ENCODE measurements at regions of chr22 and their contacts with region 1.

Region 1: DNA sequence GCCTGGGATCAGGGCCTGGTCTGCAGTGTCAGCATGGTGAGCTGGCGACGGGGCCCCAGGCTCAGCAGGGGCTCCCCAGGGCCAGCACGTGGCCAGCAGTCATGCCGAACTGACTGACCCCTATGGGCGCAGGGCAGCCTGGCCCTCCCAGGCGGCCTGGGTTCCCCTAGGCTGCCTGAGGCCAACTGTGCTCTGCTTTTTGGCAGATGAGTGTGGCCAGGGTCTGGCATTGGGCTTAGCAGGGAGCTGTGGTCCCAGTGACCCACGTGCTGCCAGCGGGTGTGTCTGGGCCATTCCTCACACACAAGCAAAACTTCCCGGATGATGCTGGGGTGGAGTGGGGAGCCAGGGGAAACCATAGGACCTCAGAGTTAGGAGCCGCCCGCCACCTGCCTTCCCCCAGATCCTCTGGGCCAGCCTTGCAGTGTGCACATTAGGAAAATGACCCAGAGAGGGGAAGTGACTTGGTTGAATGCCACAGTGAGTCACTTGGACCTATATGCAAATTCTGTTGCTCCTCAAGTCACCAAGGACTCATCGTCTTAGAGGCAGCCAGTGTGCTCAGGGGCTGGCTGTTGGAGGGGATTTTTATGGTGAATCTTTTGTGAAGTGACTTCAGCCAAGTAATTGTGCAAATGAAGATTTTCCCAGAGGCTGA is 6.5 kb downstream of the ADORA2A start:
- DNase-seq: peak in 1 of 2 donors; percentile 20
- ATAC-seq: peak; percentile 13 to 24
- H3K4me3 ChIP-seq: no peak overlapping the region
- H3K27ac ChIP-seq: peak overlapping the region; percentile 47 to 65 (median 57)
- H3K4me1 ChIP-seq: peaks cover 30 to 31% of the 10 kb centered on the region in 2 donors
- H3K27me3 ChIP-seq: no peaks in the 10 kb centered on the region
- CTCF ChIP-seq: no peak
- POLR2A ChIP-seq: no peak

Region 2: GRCh38 chr22:24503137-24503842 is 69.3 kb after region 1 on chr22:
- in situ Hi-C with region 1: loop called in 1 of 4 experiments (anchors 10 kb)
- intact Hi-C with region 1: no loop called
- DNase-seq: no peak
- ATAC-seq: peak in 1 of 2 donors; percentile 55
- H3K4me3 ChIP-seq: no peak overlapping the region
- H3K27ac ChIP-seq: no peak overlapping the region
- H3K4me1 ChIP-seq: peaks cover 0 to 10% of the 10 kb centered on the region in 2 donors
- H3K27me3 ChIP-seq: no peaks in the 10 kb centered on the region
- CTCF ChIP-seq: peak; percentile 21 to 67 (median 57)
- POLR2A ChIP-seq: no peak

Region 3: GRCh38 chr22:24516301-24516737 is 82.4 kb after region 1 on chr22:
- in situ Hi-C with region 1: loop called in 2 of 4 experiments (anchors 10 kb)
- intact Hi-C with region 1: no loop called
- DNase-seq: no peak
- ATAC-seq: no peak
- H3K4me3 ChIP-seq: no peak overlapping the region
- H3K27ac ChIP-seq: no peak overlapping the region
- H3K4me1 ChIP-seq: peaks cover 4 to 8% of the 10 kb centered on the region in 2 donors
- H3K27me3 ChIP-seq: no peaks in the 10 kb centered on the region
- CTCF ChIP-seq: no peak
- POLR2A ChIP-seq: no peak

Region 4: DNA sequence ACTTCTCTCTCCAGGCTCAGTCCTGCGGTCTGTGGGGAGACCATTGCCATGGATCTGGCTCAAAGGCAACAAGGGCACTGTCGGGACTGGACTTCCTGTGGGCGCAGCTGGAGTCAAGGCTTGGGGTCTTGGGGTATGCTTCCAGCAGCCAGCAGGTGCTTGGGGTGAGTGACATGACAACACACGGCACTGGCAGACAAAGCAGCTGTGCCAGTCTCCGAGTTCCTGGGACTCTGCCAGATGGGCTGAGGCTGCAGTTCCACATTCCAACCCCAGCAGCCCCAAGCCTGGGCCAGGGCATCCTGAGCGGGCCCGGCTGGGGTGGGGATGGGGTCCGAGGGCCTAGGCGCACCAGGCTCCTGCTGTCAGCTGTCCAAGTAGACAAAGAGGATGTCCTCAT is 108.7 kb after region 1 on chr22:
- in situ Hi-C with region 1: no loop called
- intact Hi-C with region 1: no loop called
- DNase-seq: peak; percentile 49 to 80
- ATAC-seq: peak; percentile 42 to 57
- H3K4me3 ChIP-seq: no peak overlapping the region
- H3K27ac ChIP-seq: peak overlapping the region; percentile 86 to 90 (median 89)
- H3K4me1 ChIP-seq: peaks cover 52 to 66% of the 10 kb centered on the region in 2 donors
- H3K27me3 ChIP-seq: no peaks in the 10 kb centered on the region
- CTCF ChIP-seq: peak in 4 of 5 experiments; percentile 27 to 58 (median 33)
- POLR2A ChIP-seq: no peak